ENCODE measurements at regions of chr14 and their contacts with region 1.

Region 1: DNA sequence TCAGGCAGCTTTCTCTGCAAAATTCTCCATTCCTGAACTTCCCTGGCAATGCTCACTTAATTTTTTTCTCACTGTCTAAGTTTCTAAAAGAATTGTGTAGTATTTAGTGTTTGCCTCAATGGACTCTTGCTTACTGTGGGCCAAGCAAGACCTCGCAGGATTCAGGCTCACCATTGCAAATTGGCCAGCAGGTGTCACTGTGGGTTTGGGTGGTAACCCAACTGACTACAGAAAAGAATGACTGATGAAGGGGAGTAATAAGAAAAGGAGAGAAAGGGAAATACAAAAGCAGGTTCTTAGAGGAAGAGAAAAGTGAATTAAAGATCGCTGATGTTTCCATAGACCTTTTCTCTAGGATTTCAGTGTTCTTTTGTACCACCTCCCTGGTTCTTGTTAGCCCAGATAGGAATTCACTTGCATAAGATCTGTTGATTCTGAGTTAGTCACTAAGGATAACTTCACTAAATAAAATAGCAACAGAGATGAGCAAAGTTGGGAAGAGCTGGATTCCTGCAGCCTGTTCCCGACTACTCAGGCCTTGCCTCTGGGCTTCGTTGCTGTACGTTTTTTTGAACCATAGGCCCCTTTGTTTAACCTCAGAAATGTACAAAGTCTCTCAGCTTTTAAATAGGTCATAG is 386.5 kb upstream of the DDHD1 start:
- DNase-seq: no peak
- H3K4me3 ChIP-seq: no peak overlapping the region
- H3K27ac ChIP-seq: peak overlapping the region; percentile 15 to 40 (median 30)
- H3K4me1 ChIP-seq: peaks cover 14 to 65% (median 56%) of the 10 kb centered on the region in 4 donors
- H3K27me3 ChIP-seq: no peaks in the 10 kb centered on the region
- CTCF ChIP-seq: peak; percentile 79 to 90 (median 86)
- EP300 ChIP-seq: no peak
- POLR2A ChIP-seq: no peak

Region 2: GRCh38 chr14:53953002-53953827 is 413.6 kb after region 1 on chr14:
- intact Hi-C with region 1: loop called (anchors 10 kb)
- DNase-seq: no peak
- H3K4me3 ChIP-seq: peak overlapping the region; percentile 59 to 68 (median 66)
- H3K27ac ChIP-seq: peak overlapping the region; percentile 72 to 83 (median 78)
- H3K4me1 ChIP-seq: peaks cover 21 to 63% (median 57%) of the 10 kb centered on the region in 4 donors
- H3K27me3 ChIP-seq: peaks cover 0 to 90% (median 24%) of the 10 kb centered on the region in 4 donors
- CTCF ChIP-seq: no peak
- EP300 ChIP-seq: no peak
- POLR2A ChIP-seq: peak; percentile 74

Region 3: DNA sequence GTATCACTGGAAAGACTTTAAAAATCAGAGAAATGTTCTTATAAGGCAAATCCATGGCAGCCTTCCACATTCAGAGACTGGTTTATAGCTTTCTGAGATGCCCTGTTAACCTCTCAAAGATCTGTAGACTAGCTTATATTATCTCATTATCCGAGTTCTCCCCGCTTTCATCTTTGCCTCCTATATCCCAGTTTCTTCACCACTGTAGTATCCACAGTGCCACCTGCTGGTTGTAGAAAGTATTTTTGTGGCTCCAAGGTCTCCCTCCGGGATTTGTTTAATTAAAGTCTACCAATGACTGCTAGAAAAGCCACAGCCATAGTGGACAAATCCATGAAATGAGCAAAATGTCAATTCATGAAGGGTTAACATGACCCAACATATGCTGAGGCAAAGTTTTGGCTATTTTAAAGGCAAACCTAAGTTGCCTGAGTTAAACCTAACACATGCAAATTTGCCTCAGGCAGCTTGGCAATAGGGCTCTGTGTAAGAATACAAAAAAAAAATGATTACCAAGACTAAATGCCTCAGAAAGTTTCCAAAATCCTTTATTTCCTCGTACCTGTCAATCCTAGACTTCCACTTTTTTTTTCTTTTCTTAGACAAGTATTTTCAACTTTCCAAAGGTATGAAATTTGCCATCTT is 635.8 kb after region 1 on chr14:
- intact Hi-C with region 1: loop called (anchors 1 kb)
- DNase-seq: no peak
- H3K4me3 ChIP-seq: no peak overlapping the region
- H3K27ac ChIP-seq: no peak overlapping the region
- H3K4me1 ChIP-seq: peaks cover 5 to 24% (median 15%) of the 10 kb centered on the region in 4 donors
- H3K27me3 ChIP-seq: peaks cover 0 to 7% (median 0%) of the 10 kb centered on the region in 4 donors
- CTCF ChIP-seq: peak; percentile 82 to 89 (median 83)
- EP300 ChIP-seq: no peak
- POLR2A ChIP-seq: no peak

Region 4: DNA sequence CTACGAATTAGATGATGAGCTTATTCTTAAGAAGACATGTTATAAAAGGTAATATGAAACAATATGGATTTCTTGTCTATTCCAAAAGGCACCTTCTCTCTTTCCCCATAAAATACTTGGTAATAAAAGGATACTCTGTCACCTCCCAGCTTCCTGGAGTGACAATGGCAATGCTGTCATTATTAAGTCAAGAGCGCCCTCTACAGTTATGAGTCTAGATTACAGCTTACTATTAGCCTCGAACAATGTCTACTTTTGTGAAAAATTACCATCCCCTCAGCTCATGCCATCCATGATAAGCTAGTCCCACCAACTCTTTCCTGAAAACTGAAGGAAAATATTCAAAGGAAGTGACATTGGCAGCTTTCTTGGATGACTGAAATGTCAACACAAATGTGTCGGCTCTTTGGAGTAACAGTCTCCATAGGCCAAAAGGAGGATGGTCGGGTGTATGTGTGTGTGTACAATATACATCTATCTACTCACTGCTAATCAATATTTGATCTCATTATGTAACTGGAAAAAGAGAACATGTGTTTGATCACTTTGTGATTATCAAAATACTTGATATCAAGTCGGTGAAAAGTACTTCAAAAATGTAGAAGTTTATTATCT is 808.5 kb after region 1 on chr14:
- intact Hi-C with region 1: loop called (anchors 2 kb)
- DNase-seq: no peak
- H3K4me3 ChIP-seq: no peak overlapping the region
- H3K27ac ChIP-seq: no peak overlapping the region
- H3K4me1 ChIP-seq: peaks cover 8 to 27% (median 21%) of the 10 kb centered on the region in 4 donors
- H3K27me3 ChIP-seq: no peaks in the 10 kb centered on the region
- CTCF ChIP-seq: peak; percentile 50 to 59 (median 51)
- EP300 ChIP-seq: no peak
- POLR2A ChIP-seq: no peak